ENCODE measurements at regions of chr9 and their contacts with region 1.

Region 1: DNA sequence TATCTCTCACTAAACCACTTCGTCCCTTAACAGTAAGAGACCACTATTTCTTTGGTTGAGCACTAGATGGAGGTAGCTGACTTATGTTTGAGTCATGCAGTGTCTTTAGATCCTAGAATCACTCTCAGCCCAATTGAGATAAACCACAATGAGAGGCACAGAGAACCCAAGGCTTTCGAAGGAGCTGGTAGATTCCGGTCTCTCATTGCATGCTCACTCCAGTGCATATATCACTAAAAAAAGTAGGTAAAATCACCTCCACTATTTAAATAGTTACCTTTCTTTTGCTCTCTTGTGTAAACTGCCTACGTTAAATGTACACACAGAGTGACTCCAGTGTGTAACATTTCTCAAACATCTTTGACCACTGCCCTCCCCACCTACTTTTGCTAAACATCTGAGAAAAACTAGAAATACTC is 27.6 kb downstream of the ACTL7A start:
- DNase-seq: no peak
- ATAC-seq: peak; percentile 55

Region 2: GRCh38 chr9:108859459-108860114 is 30.1 kb before region 1 on chr9:
- intact Hi-C with region 1: no loop called
- DNase-seq: no peak
- ATAC-seq: no peak

Region 3: DNA sequence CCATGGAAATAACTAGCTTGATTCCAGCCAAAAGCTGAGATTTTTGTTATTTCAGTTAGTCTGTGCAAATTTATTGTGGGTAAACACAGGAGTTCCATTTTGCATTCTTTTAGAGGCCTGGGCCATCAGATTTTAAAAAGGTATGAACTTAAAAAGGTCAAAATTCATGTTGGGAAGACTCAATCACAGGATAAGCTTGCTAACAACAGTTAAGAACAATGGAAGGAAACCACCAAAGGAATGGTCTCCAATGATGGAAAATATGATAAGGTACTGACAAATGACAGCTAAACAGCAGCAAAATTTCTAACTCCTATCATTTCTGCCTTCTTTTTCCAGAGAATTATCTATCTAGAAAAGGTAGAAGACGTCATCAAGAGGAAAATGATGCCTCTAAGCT is 60.5 kb after region 1 on chr9:
- intact Hi-C with region 1: no loop called
- DNase-seq: no peak
- ATAC-seq: no peak

Region 4: DNA sequence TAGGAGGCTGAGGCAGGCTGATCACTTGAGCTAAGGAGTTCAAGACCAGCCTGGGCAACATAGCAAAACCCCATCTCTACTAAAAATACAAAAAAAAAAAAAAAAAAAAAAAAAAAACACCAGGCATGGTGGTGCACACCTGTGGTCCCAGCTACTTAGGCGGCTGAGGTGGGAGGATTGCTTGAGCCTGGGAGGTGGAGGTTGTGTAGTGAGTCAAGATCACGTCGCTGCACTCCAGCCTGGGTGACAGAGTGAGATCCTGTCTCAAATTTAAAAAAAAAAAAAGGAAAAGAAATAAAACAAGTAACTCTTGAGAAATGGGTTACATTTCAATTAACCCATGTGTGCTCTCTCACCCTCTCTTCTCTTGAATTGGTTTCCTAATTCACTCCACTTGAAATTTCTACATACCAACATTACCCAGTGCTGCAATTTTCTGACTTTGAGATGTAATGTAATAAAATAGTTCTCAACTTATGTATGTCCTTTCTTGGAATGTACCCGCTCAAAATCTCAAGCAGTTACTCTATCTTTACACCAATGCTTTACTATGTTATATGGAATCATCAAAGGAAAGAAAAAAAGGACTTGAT is 194.3 kb after region 1 on chr9:
- intact Hi-C with region 1: no loop called
- DNase-seq: no peak
- ATAC-seq: no peak

Region 5: DNA sequence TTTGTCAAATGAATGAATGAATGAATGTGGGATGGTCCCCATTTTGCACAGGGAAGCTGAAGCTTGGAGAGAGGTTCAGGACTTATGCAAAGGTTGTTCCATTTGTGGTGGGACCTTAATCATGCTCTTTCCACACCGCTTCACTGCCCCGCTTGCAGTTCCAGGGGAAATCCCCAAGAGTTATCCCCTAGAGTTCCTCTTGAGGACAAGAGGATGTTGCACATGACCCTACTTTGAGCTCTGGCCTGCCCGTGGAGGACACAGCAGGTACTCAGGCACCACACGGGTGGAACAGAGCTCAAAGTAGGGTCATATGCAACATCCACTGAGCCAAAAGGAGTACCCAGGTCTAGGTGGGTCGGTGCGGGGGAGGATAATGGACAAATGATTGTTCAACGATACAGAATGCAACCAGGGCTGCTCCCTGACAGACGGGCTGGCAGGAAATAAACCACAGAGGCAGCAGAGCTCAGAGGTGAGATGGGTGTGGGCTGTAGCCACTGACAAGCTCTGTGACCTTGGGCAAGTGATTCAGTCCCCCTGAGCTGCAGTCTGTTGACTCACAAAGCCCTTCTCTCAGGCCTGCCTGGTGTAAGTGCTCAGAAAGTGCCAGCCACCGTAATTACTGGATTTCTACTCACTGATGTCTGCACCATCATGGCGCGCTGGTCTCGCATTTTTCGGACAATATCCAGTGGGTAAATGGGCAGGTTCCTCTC is 491.5 kb after region 1 on chr9:
- intact Hi-C with region 1: loop called (anchors 10 kb)
- DNase-seq: no peak
- ATAC-seq: no peak

Measured in Right ventricle myocardium inferior (tissue), 1 donor.